ENCODE measurements at regions of chr10 and their contacts with region 1.

Region 1: GRCh38 chr10:91298224-91298871 is 77.9 kb downstream of the PCGF5 start:
- DNase-seq: peak; percentile 71 to 83
- H3K4me3 ChIP-seq: no peak overlapping the region; the same call in 1 of the 2 replicates
- H3K4me3 Mint-ChIP-seq: peak overlapping the region; percentile 41
- H3K27ac Mint-ChIP-seq: no peak overlapping the region
- H3K4me1 ChIP-seq: peaks cover 9% of the 10 kb centered on the region; the same call in 1 of the 2 replicates
- H3K4me1 Mint-ChIP-seq: no peaks in the 10 kb centered on the region
- H3K27me3 ChIP-seq: no peaks in the 10 kb centered on the region; the same call in 1 of the 2 replicates
- H3K27me3 Mint-ChIP-seq: peaks cover 3% of the 10 kb centered on the region
- CTCF ChIP-seq: peak; percentile 87 to 90

Region 2: GRCh38 chr10:91006001-91006751 is 292.2 kb before region 1 on chr10:
- CTCF ChIA-PET with region 1: no interaction called
- POLR2A ChIA-PET with region 1: no interaction called
- intact Hi-C with region 1: loop called (anchors 2 kb)
- DNase-seq: peak in 1 of 2 experiments; percentile 74
- H3K4me3 ChIP-seq: no peak overlapping the region
- H3K4me3 Mint-ChIP-seq: no peak overlapping the region
- H3K27ac Mint-ChIP-seq: no peak overlapping the region
- H3K4me1 ChIP-seq: peaks cover 5% of the 10 kb centered on the region; the same call in 1 of the 2 replicates
- H3K4me1 Mint-ChIP-seq: peaks cover 8% of the 10 kb centered on the region
- H3K27me3 ChIP-seq: no peaks in the 10 kb centered on the region
- H3K27me3 Mint-ChIP-seq: no peaks in the 10 kb centered on the region
- CTCF ChIP-seq: peak; percentile 82 to 93

Region 3: GRCh38 chr10:91389636-91390512 is 91.5 kb after region 1 on chr10:
- CTCF ChIA-PET with region 1: no interaction called
- POLR2A ChIA-PET with region 1: no interaction called
- intact Hi-C with region 1: loop called (anchors 1 kb)
- DNase-seq: peak in 1 of 2 experiments; percentile 59
- H3K4me3 ChIP-seq: no peak overlapping the region
- H3K4me3 Mint-ChIP-seq: no peak overlapping the region
- H3K27ac Mint-ChIP-seq: no peak overlapping the region
- H3K4me1 ChIP-seq: peaks cover 5% of the 10 kb centered on the region; the same call in 1 of the 2 replicates
- H3K4me1 Mint-ChIP-seq: no peaks in the 10 kb centered on the region
- H3K27me3 ChIP-seq: peaks cover 1% of the 10 kb centered on the region; the same call in 1 of the 2 replicates
- H3K27me3 Mint-ChIP-seq: peaks cover 19% of the 10 kb centered on the region
- CTCF ChIP-seq: peak; percentile 49 to 53

Region 4: GRCh38 chr10:91487911-91488582 is 189.7 kb after region 1 on chr10:
- CTCF ChIA-PET with region 1: no interaction called
- POLR2A ChIA-PET with region 1: no interaction called
- intact Hi-C with region 1: loop called (anchors 5 kb)
- DNase-seq: no peak
- H3K4me3 ChIP-seq: no peak overlapping the region
- H3K4me3 Mint-ChIP-seq: no peak overlapping the region
- H3K27ac Mint-ChIP-seq: no peak overlapping the region
- H3K4me1 ChIP-seq: no peaks in the 10 kb centered on the region
- H3K4me1 Mint-ChIP-seq: no peaks in the 10 kb centered on the region
- H3K27me3 ChIP-seq: no peaks in the 10 kb centered on the region
- H3K27me3 Mint-ChIP-seq: no peaks in the 10 kb centered on the region
- CTCF ChIP-seq: no peak

Region 5: GRCh38 chr10:91590142-91590903 is 292.0 kb after region 1 on chr10:
- CTCF ChIA-PET with region 1: no interaction called
- POLR2A ChIA-PET with region 1: no interaction called
- intact Hi-C with region 1: loop called (anchors 5 kb)
- DNase-seq: no peak
- H3K4me3 ChIP-seq: no peak overlapping the region
- H3K4me3 Mint-ChIP-seq: no peak overlapping the region
- H3K27ac Mint-ChIP-seq: no peak overlapping the region
- H3K4me1 ChIP-seq: peaks cover 17% of the 10 kb centered on the region
- H3K4me1 Mint-ChIP-seq: peaks cover 12% of the 10 kb centered on the region
- H3K27me3 ChIP-seq: no peaks in the 10 kb centered on the region
- H3K27me3 Mint-ChIP-seq: no peaks in the 10 kb centered on the region
- CTCF ChIP-seq: no peak

Region 6: DNA sequence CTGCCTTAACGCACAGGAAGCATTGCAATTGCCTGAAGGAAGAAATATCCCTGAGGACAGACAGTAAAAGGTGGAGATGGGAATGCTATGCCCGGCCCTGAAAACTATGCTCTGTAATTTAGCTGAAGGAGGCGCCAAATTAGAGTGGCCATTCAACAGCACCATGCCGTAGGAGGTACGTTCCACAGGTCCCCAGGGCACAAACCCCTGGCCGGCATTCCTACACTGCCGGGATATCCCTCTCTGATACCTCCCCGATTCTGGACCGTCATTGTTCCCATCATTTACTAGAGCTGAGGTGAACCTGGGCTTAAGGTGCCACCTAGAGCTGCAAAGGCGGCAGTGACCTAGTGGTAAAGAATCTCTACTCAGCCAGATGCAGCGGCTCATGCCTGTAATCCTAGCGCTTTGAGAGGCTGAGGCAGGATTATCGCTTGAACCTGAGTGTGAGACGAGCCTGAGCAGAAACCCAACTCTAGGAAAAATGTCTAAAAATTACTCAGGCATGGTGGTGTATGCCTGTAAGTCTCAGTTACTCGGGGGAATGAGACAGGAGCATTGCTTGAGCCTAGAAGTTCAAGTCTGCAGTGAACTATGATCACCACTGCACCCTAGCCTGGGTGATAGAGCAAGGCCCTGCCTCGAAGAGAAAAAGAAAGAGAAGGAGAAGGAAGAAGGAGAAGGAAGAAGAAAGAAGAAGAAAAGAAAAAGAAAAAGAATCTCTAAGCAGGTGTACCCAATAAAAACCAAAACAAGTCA is 446.9 kb after region 1 on chr10:
- CTCF ChIA-PET with region 1: no interaction called
- POLR2A ChIA-PET with region 1: no interaction called
- intact Hi-C with region 1: loop called (anchors 2 kb)
- DNase-seq: peak; percentile 42 to 55
- H3K4me3 ChIP-seq: no peak overlapping the region
- H3K4me3 Mint-ChIP-seq: no peak overlapping the region
- H3K27ac Mint-ChIP-seq: no peak overlapping the region
- H3K4me1 ChIP-seq: peaks cover 7% of the 10 kb centered on the region; the same call in 1 of the 2 replicates
- H3K4me1 Mint-ChIP-seq: peaks cover 5% of the 10 kb centered on the region
- H3K27me3 ChIP-seq: no peaks in the 10 kb centered on the region
- H3K27me3 Mint-ChIP-seq: peaks cover 9% of the 10 kb centered on the region
- CTCF ChIP-seq: peak; percentile 29 to 54